ENCODE measurements at regions of chr22 and their contacts with region 1.

Region 1: GRCh38 chr22:29633514-29634312 is 30.3 kb downstream of the NF2 start:
- DNase-seq: peak; percentile 29
- H3K4me3 ChIP-seq: no peak overlapping the region
- CTCF ChIP-seq: no peak

Region 2: GRCh38 chr22:29689880-29690213 is 56.1 kb after region 1 on chr22:
- in situ Hi-C with region 1: loop called (anchors 5 kb)
- DNase-seq: peak; percentile 23
- H3K4me3 ChIP-seq: no peak overlapping the region
- CTCF ChIP-seq: peak; percentile 78

Region 3: GRCh38 chr22:29701155-29701999 is 67.7 kb after region 1 on chr22:
- in situ Hi-C with region 1: no loop called
- DNase-seq: no peak
- H3K4me3 ChIP-seq: no peak overlapping the region
- CTCF ChIP-seq: peak; percentile 16

Region 4: GRCh38 chr22:29780748-29781676 is 147.3 kb after region 1 on chr22:
- in situ Hi-C with region 1: no loop called
- DNase-seq: peak; percentile 85
- H3K4me3 ChIP-seq: no peak overlapping the region
- CTCF ChIP-seq: no peak

Measured in astrocyte of the cerebellum (primary cell).